PC-3 (cell line): ENCODE measurements at regions of chr5 and their contacts with region 1.

Region 1: GRCh38 chr5:77143998-77144836 is 57.1 kb upstream of the ZBED3 start:
- DNase-seq: peak; percentile 65
- ATAC-seq: peak; percentile 57
- H3K4me3 ChIP-seq: no peak overlapping the region
- H3K27ac ChIP-seq: no peak overlapping the region
- H3K4me1 ChIP-seq: peaks cover 9% of the 10 kb centered on the region
- H3K27me3 ChIP-seq: no peaks in the 10 kb centered on the region
- CTCF ChIP-seq: peak; percentile 78

Region 2: GRCh38 chr5:77239126-77239741 is 95.0 kb after region 1 on chr5:
- CTCF ChIA-PET with region 1: no interaction called
- POLR2A ChIA-PET with region 1: no interaction called
- intact Hi-C with region 1: loop called (anchors 1 kb)
- DNase-seq: peak; percentile 50
- ATAC-seq: peak; percentile 40; the same call in 1 of the 2 replicates
- H3K4me3 ChIP-seq: no peak overlapping the region
- H3K27ac ChIP-seq: no peak overlapping the region
- H3K4me1 ChIP-seq: no peaks in the 10 kb centered on the region
- H3K27me3 ChIP-seq: peaks cover 4% of the 10 kb centered on the region; the same call in 1 of the 2 replicates
- CTCF ChIP-seq: peak; percentile 66

Region 3: DNA sequence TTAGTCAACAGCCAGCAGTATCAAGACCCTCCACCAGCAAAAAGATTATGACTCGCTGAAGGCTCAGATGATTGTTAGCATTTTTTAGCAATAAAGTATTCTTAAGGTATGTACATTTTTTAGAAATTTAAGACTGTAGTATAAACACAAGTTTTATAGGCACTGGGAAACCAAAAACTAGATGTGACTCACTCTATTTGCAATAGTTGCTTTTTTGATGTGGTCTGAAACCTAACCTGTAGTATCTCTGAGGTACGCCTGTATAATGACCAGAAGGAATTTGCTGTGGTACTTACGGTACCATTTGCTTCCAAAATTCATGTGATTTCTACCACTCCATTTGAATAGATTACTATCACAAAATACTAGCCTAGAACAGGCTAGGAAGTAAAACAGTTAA is 287.1 kb after region 1 on chr5:
- CTCF ChIA-PET with region 1: no interaction called
- POLR2A ChIA-PET with region 1: no interaction called
- intact Hi-C with region 1: loop called (anchors 2 kb)
- DNase-seq: peak; percentile 85
- ATAC-seq: peak; percentile 86
- H3K4me3 ChIP-seq: no peak overlapping the region
- H3K27ac ChIP-seq: peak overlapping the region; percentile 44; the same call in 1 of the 2 replicates
- H3K4me1 ChIP-seq: peaks cover 39% of the 10 kb centered on the region
- H3K27me3 ChIP-seq: no peaks in the 10 kb centered on the region
- CTCF ChIP-seq: no peak